SK-N-SH (cell line): ENCODE measurements at regions of chr2 and their contacts with region 1.

Region 1: GRCh38 chr2:157327621-157328500 is 2.2 kb upstream of the ERMN start:
- DNase-seq: peak; percentile 53
- H3K4me3 ChIP-seq: 0 out of 4 replicates have a peak overlapping the region, but pooled peaks of 1 of the 2 experiments have one; percentile 22
- H3K27ac ChIP-seq: no peak overlapping the region
- H3K4me1 ChIP-seq: no peaks in the 10 kb centered on the region
- H3K27me3 ChIP-seq: peaks cover 31% of the 10 kb centered on the region; the same call in 1 of the 2 replicates
- CTCF ChIP-seq: peak; percentile 89
- EP300 ChIP-seq: no peak
- RAD21 ChIP-seq: peak; percentile 57

Region 2: DNA sequence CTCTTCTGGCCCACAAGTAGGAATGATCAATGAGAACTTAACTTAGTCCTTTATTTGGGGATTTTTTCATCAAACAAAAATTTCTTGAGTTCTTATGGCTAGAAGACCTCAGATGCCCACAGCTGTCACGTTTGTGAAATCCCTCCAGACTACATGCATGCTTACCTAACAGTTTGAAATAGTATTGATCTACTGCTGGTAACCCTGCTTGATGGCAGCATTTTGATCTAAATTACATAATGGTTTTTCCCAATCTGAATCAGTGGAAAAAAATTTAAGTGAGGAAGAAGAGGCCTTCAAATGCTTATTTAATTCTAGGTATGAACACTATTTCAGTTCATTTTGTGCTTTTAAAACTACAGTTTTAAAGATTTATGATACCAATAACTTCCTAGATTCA is 16.2 kb before region 1 on chr2:
- CTCF ChIA-PET with region 1: interaction called, 20 read pairs
- POLR2A ChIA-PET with region 1: no interaction called
- DNase-seq: no peak
- H3K4me3 ChIP-seq: no peak overlapping the region
- H3K27ac ChIP-seq: no peak overlapping the region
- H3K4me1 ChIP-seq: 0 out of 4 replicates have a peak, but pooled peaks cover 0 to 4% of the 10 kb centered on the region in 2 experiments
- H3K27me3 ChIP-seq: no peaks in the 10 kb centered on the region; the same call in 1 of the 2 replicates
- CTCF ChIP-seq: no peak
- EP300 ChIP-seq: no peak
- RAD21 ChIP-seq: no peak

Region 3: GRCh38 chr2:157404363-157404762 is 76.5 kb after region 1 on chr2:
- CTCF ChIA-PET with region 1: no interaction called
- POLR2A ChIA-PET with region 1: no interaction called
- DNase-seq: no peak
- H3K4me3 ChIP-seq: no peak overlapping the region
- H3K27ac ChIP-seq: no peak overlapping the region
- H3K4me1 ChIP-seq: no peaks in the 10 kb centered on the region
- H3K27me3 ChIP-seq: no peaks in the 10 kb centered on the region; the same call in 1 of the 2 replicates
- CTCF ChIP-seq: no peak
- EP300 ChIP-seq: no peak
- RAD21 ChIP-seq: no peak

Region 4: GRCh38 chr2:157463002-157463401 is 135.1 kb after region 1 on chr2:
- CTCF ChIA-PET with region 1: no interaction called
- POLR2A ChIA-PET with region 1: no interaction called
- DNase-seq: no peak
- H3K4me3 ChIP-seq: no peak overlapping the region
- H3K27ac ChIP-seq: no peak overlapping the region
- H3K4me1 ChIP-seq: no peaks in the 10 kb centered on the region
- H3K27me3 ChIP-seq: peaks cover 7% of the 10 kb centered on the region; the same call in 1 of the 2 replicates
- CTCF ChIP-seq: no peak
- EP300 ChIP-seq: no peak
- RAD21 ChIP-seq: no peak